ENCODE measurements at regions of chr18 and their contacts with region 1.

Region 1: DNA sequence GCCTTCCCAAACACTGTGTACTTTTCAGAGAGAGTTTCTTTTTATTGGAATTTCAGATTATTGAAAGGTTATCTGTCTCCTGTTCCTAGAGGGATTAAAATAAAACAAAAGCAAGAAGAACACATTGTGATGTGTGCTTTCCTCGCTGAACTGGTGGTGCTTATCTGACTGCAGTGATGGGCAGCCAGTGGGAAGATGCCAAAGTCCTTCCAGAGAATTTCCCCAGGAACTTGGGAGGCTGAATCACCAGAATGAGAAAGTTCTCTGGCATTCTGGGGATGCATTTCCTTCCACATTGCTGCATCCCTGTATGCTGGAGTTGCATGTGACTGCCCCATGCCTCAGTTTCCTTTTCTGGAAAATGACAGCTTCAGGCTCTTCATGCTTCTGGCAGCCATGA is 53.9 kb upstream of the SEC11C start:
- DNase-seq: no peak
- H3K4me3 ChIP-seq: no peak overlapping the region
- H3K4me3 Mint-ChIP-seq: no peak overlapping the region
- H3K27ac Mint-ChIP-seq: no peak overlapping the region
- H3K4me1 ChIP-seq: no peaks in the 10 kb centered on the region
- H3K4me1 Mint-ChIP-seq: no peaks in the 10 kb centered on the region
- H3K27me3 ChIP-seq: no peaks in the 10 kb centered on the region
- H3K27me3 Mint-ChIP-seq: peaks cover 8% of the 10 kb centered on the region
- CTCF ChIP-seq: no peak

Region 2: DNA sequence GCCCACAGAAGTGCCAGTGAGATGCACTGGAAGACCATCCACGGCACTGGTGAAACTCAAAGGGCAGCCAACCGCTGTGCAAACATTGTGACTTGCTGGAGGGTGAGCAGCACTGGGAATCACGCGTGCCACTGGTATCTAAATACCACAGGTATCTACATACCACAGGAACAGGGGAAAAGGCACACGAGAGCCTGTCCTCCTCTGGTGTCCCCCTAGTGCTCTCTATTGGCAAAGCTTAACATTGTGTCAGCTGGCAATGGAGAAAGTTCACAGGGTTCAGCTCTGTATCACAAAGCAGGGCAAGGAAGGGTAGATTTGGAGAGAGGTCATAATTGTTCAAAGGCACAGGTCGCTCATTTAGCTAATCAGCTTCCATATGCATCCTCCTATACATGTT is 41.2 kb after region 1 on chr18:
- CTCF ChIA-PET with region 1: no interaction called
- POLR2A ChIA-PET with region 1: no interaction called
- intact Hi-C with region 1: loop called (anchors 2 kb)
- DNase-seq: peak in 1 of 2 experiments; percentile 1
- H3K4me3 ChIP-seq: no peak overlapping the region
- H3K4me3 Mint-ChIP-seq: no peak overlapping the region
- H3K27ac Mint-ChIP-seq: no peak overlapping the region
- H3K4me1 ChIP-seq: no peaks in the 10 kb centered on the region
- H3K4me1 Mint-ChIP-seq: no peaks in the 10 kb centered on the region
- H3K27me3 ChIP-seq: no peaks in the 10 kb centered on the region
- H3K27me3 Mint-ChIP-seq: peaks cover 4% of the 10 kb centered on the region
- CTCF ChIP-seq: no peak

Region 3: DNA sequence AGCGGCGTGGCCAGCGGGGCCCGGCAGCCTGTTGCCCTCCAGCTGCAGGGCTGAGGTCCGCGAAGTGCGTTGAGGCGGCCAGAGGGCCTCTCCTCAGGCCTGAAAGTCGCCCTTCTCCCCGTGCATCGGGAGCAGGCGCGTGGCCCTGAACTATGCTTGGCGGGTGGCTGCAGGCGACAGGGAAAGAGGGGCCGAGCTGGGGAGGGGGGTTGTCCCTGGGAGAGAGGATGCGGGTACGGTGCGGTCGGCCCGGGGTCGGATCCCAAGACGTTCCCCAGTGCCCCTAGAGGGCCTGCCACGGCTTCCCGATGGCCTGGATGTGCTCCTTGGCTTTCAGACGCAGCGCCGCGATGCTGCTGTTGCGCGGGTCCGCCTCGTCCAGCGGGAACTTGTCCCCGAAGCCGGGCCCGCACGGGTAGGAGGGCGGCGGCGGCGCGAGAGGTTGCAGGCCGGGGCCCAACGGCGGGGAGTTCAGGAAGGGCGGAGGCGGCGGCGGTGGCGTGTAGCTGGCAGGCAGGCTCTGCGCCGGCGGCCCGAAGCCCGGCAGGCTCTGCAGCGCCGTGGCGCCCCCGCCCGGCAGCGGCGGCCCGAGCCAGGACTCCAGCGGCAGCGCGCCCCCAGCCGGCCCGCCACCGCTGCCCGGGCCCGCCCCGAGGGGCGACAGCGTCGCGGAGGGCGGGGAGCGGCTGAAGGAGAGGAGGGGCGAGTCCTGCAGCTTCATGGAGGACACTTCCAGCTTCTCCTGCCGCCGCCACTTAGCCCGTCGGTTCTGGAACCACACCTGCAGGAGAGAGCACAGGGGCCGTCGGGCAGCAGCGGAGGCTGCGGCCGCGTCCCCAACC is 183.1 kb after region 1 on chr18:
- CTCF ChIA-PET with region 1: no interaction called
- POLR2A ChIA-PET with region 1: no interaction called
- intact Hi-C with region 1: loop called (anchors 10 kb)
- DNase-seq: peak; percentile 40 to 68
- H3K4me3 ChIP-seq: peak overlapping the region; percentile 31
- H3K4me3 Mint-ChIP-seq: peak overlapping the region; percentile 67
- H3K27ac Mint-ChIP-seq: no peak overlapping the region
- H3K4me1 ChIP-seq: no peaks in the 10 kb centered on the region
- H3K4me1 Mint-ChIP-seq: no peaks in the 10 kb centered on the region
- H3K27me3 ChIP-seq: no peaks in the 10 kb centered on the region
- H3K27me3 Mint-ChIP-seq: peaks cover 18% of the 10 kb centered on the region
- CTCF ChIP-seq: no peak

Measured in Caco-2 (cell line).